Activated CD8-positive, alpha-beta memory T cell treated with anti-CD3 and anti-CD28 coated beads, Interleukin-2, amount 10 ng/mL, durations not matched to agents 7 days and 5 days (primary cell): ENCODE measurements at regions of chr1 and their contacts with region 1.

Region 1: DNA sequence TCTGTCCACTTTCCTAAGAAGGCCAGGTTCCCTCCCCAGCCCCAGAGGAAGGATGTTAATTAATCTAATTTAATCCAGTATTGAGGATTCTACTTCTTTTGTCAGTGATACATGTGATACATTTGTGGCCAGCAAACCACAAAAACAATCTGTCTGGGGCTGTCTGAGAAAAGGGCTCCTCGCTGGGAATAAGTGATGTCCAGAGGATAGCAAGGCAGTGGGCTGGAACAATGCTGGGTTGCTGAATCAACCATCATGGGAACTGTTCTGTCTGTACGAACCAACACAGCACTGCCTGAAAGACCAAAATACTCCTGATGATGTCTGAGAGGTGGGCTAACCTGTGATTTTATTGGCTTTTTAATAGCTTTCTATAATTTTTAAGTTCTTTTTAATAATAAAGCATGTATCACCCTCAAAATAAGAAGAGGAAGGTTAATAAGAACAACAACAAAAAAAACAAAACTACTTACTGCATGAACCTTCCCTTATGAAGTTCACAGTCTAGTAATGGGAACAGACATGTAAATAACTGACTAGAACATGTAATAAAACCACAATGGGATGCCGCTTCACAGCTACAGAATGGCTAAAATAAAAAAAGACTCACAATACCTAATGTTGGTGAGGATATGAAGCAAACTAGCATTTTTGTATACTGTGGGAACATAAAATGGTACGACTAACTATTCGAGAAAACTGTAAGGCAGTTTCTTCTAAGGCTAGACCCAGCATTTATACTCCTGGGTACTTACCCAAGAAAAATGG is 11.4 kb upstream of the ADAR start:
- DNase-seq: no peak
- ATAC-seq: no peak
- H3K4me3 Mint-ChIP-seq: no peak overlapping the region
- H3K27ac Mint-ChIP-seq: no peak overlapping the region
- H3K4me1 Mint-ChIP-seq: peaks cover 62% of the 10 kb centered on the region
- H3K27me3 Mint-ChIP-seq: no peaks in the 10 kb centered on the region

Region 2: DNA sequence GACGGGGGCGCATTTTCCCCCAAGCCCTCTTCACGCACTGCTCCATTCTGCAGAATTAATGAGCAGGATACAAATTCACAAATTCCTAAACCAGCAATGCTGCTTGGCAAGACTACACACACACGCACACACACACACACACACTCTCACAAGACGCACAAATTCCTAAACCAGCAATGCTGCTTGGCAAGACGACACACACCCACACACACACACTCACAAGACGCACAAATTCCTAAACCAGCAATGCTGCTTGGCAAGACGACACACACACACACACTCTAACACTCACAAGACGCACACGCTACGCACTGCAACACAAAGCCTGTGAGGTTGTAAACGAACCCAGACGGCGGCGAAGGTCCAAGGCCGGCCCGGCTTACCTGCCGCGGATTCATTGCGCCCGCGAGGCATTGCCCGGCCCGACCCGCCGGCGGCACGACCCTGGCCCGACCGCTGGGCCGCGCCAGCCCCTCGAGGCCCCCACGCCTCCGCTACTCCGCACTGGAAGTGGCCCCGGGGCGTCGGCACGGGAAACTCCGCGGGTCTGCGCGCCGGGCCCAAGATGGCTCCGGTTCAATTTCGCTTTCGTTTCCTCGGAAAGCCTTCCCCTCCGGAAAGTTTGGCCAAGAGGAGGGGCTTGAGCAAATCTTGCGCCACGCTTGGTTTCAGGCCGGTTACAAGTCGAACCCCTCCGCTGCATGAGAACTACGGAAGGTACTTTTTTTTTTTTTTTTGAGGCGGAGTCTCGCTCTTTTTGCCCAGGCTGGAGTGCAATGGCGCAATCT is 11.6 kb before region 1 on chr1 and contains the start of gene ADAR:
- CTCF ChIA-PET with region 1: interaction called, 11 read pairs
- DNase-seq: peak; percentile 97
- ATAC-seq: peak; percentile 86
- H3K4me3 Mint-ChIP-seq: peak within 1 kb of the TSS; percentile 92
- H3K27ac Mint-ChIP-seq: peak within 1 kb of the TSS; percentile 98
- H3K4me1 Mint-ChIP-seq: peaks cover 73% of the 10 kb centered on the region
- H3K27me3 Mint-ChIP-seq: no peaks in the 10 kb centered on the region
- total RNA-seq, gene ADAR: 369 to 434 TPM

Region 3: GRCh38 chr1:154635162-154635561 is 15.8 kb after region 1 on chr1:
- CTCF ChIA-PET with region 1: no interaction called
- DNase-seq: no peak
- ATAC-seq: no peak
- H3K4me3 Mint-ChIP-seq: no peak overlapping the region
- H3K27ac Mint-ChIP-seq: no peak overlapping the region
- H3K4me1 Mint-ChIP-seq: no peaks in the 10 kb centered on the region
- H3K27me3 Mint-ChIP-seq: peaks cover 59% of the 10 kb centered on the region

Region 4: GRCh38 chr1:154663471-154664060 is 44.2 kb after region 1 on chr1:
- CTCF ChIA-PET with region 1: no interaction called
- DNase-seq: no peak
- ATAC-seq: no peak
- H3K4me3 Mint-ChIP-seq: no peak overlapping the region
- H3K27ac Mint-ChIP-seq: no peak overlapping the region
- H3K4me1 Mint-ChIP-seq: no peaks in the 10 kb centered on the region
- H3K27me3 Mint-ChIP-seq: peaks cover 33% of the 10 kb centered on the region